Activated naive CD4-positive, alpha-beta T cell treated with anti-CD3 and anti-CD28 coated beads for 36 hours (primary cell): ENCODE measurements at regions of chr21 and their contacts with region 1.

Region 1: DNA sequence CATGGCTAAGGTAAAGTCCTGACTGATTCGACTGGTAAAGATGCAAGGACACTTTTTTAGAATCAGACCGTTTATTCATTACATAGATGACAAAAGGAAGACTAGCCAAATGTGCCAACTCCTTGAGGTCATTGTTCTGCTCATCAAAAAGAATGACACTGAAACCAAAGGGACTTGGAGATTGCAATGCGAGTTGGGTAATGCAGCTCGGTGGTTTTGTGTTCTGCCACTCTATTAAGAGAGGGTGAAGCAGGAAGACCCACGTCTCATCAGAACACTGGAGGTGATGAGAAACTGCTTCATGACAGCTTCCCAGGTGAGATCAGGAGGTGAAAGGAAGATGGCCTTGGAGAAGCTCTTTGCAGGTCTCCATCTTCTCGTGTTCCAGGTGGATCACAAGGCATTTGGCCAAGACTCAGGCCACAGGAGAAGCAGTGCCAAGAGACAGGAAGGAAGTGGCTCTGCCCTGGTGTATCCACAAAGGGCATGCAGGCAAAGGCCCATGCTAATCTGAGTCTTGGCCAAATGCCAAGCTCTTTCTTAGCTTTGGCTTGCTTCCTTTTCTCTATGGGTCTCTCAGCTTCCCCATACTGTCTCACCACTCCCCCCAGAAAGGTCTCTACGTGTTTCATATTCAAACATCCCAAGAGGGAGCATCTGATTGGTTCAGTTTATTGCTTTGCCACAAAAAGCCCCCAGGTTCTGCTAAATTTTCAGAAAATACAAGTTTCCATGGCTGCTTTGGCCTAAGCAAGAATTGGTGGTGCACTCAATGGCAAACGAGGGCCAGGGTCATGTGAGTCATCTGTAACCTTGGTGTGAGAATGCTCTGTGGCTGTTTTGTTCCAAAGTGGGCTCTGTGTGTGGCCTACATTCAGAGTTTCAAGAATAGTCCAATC is 5.7 kb upstream of the CCT8 start:
- DNase-seq: peak; percentile 48
- H3K4me3 Mint-ChIP-seq: peak overlapping the region; percentile 81
- H3K27ac Mint-ChIP-seq: peak overlapping the region; percentile 96
- H3K4me1 Mint-ChIP-seq: peaks cover 54% of the 10 kb centered on the region
- H3K27me3 Mint-ChIP-seq: no peaks in the 10 kb centered on the region

Region 2: GRCh38 chr21:28771790-28772501 is 307.2 kb before region 1 on chr21:
- CTCF ChIA-PET with region 1: no interaction called
- intact Hi-C with region 1: loop called (anchors 2 kb)
- DNase-seq: peak; percentile 23
- H3K4me3 Mint-ChIP-seq: no peak overlapping the region
- H3K27ac Mint-ChIP-seq: no peak overlapping the region
- H3K4me1 Mint-ChIP-seq: peaks cover 52% of the 10 kb centered on the region
- H3K27me3 Mint-ChIP-seq: no peaks in the 10 kb centered on the region

Region 3: DNA sequence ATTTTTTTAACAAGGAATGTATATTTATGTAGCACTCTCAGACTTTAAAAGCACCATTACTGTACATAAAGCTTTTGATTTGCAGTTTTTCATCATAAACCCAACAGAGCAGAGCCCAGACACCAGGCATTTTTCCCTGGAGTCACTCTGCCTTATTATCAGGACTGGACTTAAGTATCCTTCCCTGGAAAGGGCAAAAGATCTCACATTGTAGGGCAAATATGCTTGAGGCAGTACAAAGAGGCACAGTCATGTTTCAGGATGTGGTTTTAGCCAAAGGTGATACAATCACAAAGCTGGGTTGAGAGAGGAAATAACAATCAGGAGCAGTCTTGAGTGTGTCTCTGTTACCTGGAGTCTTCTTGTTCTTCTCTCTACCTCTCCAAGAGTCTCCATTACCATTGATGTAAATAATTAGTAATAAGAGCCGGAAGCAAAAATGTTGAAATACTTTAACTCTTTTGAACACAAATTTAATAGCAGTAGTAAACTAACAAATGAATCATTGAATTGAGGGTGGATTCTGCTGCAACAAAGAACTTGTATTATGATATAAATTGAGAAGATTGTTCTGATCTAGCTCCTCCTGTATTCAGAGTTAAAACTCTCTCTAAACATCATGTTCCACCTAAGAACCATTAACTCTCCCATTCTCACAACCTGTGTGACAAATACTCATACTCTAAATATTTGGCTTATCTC is 247.0 kb before region 1 on chr21:
- CTCF ChIA-PET with region 1: no interaction called
- intact Hi-C with region 1: loop called (anchors 2 kb)
- DNase-seq: peak; percentile 36
- H3K4me3 Mint-ChIP-seq: no peak overlapping the region
- H3K27ac Mint-ChIP-seq: no peak overlapping the region
- H3K4me1 Mint-ChIP-seq: peaks cover 57% of the 10 kb centered on the region
- H3K27me3 Mint-ChIP-seq: no peaks in the 10 kb centered on the region

Region 4: GRCh38 chr21:29002442-29003144 is 76.5 kb before region 1 on chr21:
- CTCF ChIA-PET with region 1: interaction called, 3 read pairs
- intact Hi-C with region 1: loop called (anchors 1 kb)
- DNase-seq: peak; percentile 96
- H3K4me3 Mint-ChIP-seq: peak overlapping the region; percentile 89
- H3K27ac Mint-ChIP-seq: peak overlapping the region; percentile 95
- H3K4me1 Mint-ChIP-seq: peaks cover 6% of the 10 kb centered on the region
- H3K27me3 Mint-ChIP-seq: no peaks in the 10 kb centered on the region

Region 5: GRCh38 chr21:29181799-29182470 is 102.8 kb after region 1 on chr21:
- CTCF ChIA-PET with region 1: interaction called, 7 read pairs
- intact Hi-C with region 1: loop called (anchors 2 kb)
- DNase-seq: peak; percentile 37
- H3K4me3 Mint-ChIP-seq: peak overlapping the region; percentile 45
- H3K27ac Mint-ChIP-seq: peak overlapping the region; percentile 93
- H3K4me1 Mint-ChIP-seq: peaks cover 14% of the 10 kb centered on the region
- H3K27me3 Mint-ChIP-seq: no peaks in the 10 kb centered on the region

Region 6: DNA sequence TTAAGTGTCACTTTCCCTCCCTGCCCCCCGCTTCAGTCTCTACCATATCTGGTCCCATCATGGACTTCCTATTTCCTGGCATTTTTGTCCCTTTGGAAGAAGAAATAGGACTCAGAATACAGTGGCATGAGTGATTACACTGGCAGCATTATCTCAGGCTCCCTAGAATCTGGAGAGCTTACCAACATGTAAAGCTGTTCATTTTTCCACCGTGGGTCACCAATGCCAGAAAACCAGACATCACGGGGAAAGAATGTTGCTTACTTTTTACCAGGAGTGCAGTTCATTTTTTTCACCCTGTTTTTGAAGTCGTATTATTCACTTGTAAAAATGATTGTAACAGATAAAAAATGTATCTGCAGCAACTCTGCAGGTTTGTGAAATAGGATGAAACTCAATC is 264.4 kb after region 1 on chr21:
- CTCF ChIA-PET with region 1: no interaction called
- intact Hi-C with region 1: loop called (anchors 5 kb)
- DNase-seq: no peak
- H3K4me3 Mint-ChIP-seq: no peak overlapping the region
- H3K27ac Mint-ChIP-seq: no peak overlapping the region
- H3K4me1 Mint-ChIP-seq: peaks cover 39% of the 10 kb centered on the region
- H3K27me3 Mint-ChIP-seq: no peaks in the 10 kb centered on the region